Endothelial cell of umbilical vein (primary cell): ENCODE measurements at regions of chr11 and their contacts with region 1.

Region 1: DNA sequence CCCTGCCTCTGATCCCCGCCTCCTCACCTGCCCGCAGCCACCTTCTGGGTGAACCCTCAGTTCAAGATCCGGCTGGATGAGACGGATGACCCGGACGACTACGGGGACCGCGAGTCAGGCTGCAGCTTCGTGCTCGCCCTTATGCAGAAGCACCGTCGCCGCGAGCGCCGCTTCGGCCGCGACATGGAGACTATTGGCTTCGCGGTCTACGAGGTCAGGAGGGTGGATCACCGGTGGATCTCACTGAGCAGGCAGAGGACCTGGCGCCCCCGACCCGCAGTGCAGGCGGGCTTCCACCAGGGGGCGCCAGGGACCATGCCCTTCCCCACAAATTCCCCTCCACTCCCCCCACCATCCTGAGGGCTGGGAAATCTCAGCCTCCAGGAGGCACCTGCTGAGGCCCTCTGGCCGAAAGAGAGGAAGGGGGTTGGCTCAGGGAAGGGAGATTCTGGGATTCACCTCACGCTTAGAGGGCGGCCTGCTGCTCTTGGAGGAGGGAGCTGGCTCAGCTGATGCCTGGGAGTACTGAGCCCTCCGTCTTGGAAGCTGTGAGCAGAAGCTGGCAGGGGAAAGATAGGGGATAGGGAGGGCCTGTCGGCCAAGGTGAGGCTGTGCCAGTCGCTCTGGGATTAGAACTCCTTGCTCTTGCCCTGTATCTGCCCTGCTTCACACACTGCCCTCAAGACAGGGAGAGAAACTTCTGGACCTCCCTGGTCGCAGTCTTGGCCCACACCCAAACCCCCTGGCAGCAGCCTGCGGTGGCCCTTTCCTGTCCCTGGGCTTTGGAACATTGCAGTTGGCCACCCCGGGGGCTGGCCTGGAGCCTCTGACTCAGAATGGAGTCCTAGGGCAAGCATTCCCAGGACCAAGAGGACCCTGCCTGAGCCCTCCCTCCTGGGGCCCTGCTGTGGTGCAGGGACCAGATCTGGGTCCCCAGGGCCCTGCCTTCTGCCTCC is 23.2 kb downstream of the CAPN1 start:
- DNase-seq: peak; percentile 40
- H3K4me3 ChIP-seq: no peak overlapping the region
- H3K27ac ChIP-seq: no peak overlapping the region
- H3K4me1 ChIP-seq: no peaks in the 10 kb centered on the region
- H3K27me3 ChIP-seq: no peaks in the 10 kb centered on the region
- CTCF ChIP-seq: peak; percentile 83 to 98
- POLR2A ChIP-seq: no peak

Region 2: GRCh38 chr11:65219930-65220213 is 14.9 kb after region 1 on chr11:
- CTCF ChIA-PET with region 1: interaction called, 14 read pairs
- POLR2A ChIA-PET with region 1: no interaction called
- dilution Hi-C with region 1: no loop called
- intact Hi-C with region 1: loop called (anchors 2 kb)
- DNase-seq: no peak
- H3K4me3 ChIP-seq: no peak overlapping the region
- H3K27ac ChIP-seq: no peak overlapping the region
- H3K4me1 ChIP-seq: peaks cover 6% of the 10 kb centered on the region
- H3K27me3 ChIP-seq: no peaks in the 10 kb centered on the region
- CTCF ChIP-seq: no peak
- POLR2A ChIP-seq: no peak

Region 3: DNA sequence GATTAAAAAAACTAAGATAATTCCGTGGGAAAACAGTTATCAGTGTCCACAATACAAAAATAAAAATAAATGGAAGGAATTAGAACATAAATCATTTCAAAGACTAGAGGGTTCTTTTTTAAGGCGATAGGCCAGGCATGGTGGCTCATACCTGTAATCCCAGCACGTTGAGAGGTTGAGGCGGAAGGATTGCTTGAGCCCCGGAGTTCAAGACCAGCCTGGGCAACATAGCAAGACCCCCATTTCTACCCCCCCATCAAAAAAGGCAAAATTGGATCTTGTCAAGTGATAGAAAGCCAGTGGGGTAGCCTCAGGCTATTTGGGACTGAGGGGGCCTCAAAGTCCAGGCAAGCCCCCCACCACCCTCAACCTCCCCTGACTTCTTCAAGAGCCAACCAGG is 36.2 kb after region 1 on chr11:
- CTCF ChIA-PET with region 1: no interaction called
- POLR2A ChIA-PET with region 1: no interaction called
- dilution Hi-C with region 1: no loop called
- intact Hi-C with region 1: no loop called
- DNase-seq: no peak
- H3K4me3 ChIP-seq: no peak overlapping the region
- H3K27ac ChIP-seq: no peak overlapping the region
- H3K4me1 ChIP-seq: no peaks in the 10 kb centered on the region
- H3K27me3 ChIP-seq: no peaks in the 10 kb centered on the region
- CTCF ChIP-seq: no peak
- POLR2A ChIP-seq: no peak

Region 4: DNA sequence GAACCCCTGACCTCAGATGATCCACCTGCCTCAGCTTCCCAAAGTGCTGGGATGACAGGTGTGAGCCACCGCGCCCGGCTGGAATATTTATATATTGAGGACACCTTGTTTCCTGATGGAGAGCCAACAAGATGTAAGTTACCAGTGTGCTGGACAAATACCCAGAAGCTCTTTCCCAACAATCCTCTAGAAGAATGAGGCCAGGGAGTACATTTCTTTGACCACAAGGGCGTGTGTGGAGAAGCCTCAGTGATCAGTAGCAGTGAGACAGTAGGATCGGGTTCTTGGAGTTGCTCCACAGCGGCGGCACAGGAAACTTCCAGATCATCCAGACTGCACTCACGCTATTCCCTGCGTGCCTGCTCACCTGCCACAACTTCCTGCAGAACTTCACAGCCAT is 46.6 kb after region 1 on chr11:
- CTCF ChIA-PET with region 1: interaction called, 27 read pairs
- POLR2A ChIA-PET with region 1: no interaction called
- dilution Hi-C with region 1: no loop called
- intact Hi-C with region 1: loop called (anchors 1 kb)
- DNase-seq: no peak
- H3K4me3 ChIP-seq: no peak overlapping the region
- H3K27ac ChIP-seq: no peak overlapping the region
- H3K4me1 ChIP-seq: no peaks in the 10 kb centered on the region
- H3K27me3 ChIP-seq: no peaks in the 10 kb centered on the region
- CTCF ChIP-seq: no peak
- POLR2A ChIP-seq: no peak